ENCODE measurements at regions of chrX and their contacts with region 1.

Region 1: GRCh38 chrX:118872102-118872566 is 48.5 kb downstream of the ZCCHC12 start:
- DNase-seq: no peak
- ATAC-seq: no peak
- H3K4me3 ChIP-seq: no peak overlapping the region
- H3K27ac ChIP-seq: no peak overlapping the region
- H3K4me1 ChIP-seq: no peaks in the 10 kb centered on the region
- H3K27me3 ChIP-seq: no peaks in the 10 kb centered on the region
- CTCF ChIP-seq: no peak
- EP300 ChIP-seq: no peak
- POLR2A ChIP-seq: no peak
- RAD21 ChIP-seq: no peak

Region 2: GRCh38 chrX:118644378-118644777 is 227.8 kb before region 1 on chrX:
- CTCF ChIA-PET with region 1: no interaction called
- POLR2A ChIA-PET with region 1: no interaction called
- in situ Hi-C with region 1: no loop called
- intact Hi-C with region 1: no loop called
- DNase-seq: peak; percentile 54
- ATAC-seq: peak; percentile 87
- H3K4me3 ChIP-seq: no peak overlapping the region
- H3K27ac ChIP-seq: no peak overlapping the region
- H3K4me1 ChIP-seq: no peaks in the 10 kb centered on the region
- H3K27me3 ChIP-seq: no peaks in the 10 kb centered on the region
- CTCF ChIP-seq: peak; percentile 58
- EP300 ChIP-seq: no peak
- POLR2A ChIP-seq: no peak
- RAD21 ChIP-seq: peak; percentile 50; the same call in 1 of the 2 replicates

Region 3: DNA sequence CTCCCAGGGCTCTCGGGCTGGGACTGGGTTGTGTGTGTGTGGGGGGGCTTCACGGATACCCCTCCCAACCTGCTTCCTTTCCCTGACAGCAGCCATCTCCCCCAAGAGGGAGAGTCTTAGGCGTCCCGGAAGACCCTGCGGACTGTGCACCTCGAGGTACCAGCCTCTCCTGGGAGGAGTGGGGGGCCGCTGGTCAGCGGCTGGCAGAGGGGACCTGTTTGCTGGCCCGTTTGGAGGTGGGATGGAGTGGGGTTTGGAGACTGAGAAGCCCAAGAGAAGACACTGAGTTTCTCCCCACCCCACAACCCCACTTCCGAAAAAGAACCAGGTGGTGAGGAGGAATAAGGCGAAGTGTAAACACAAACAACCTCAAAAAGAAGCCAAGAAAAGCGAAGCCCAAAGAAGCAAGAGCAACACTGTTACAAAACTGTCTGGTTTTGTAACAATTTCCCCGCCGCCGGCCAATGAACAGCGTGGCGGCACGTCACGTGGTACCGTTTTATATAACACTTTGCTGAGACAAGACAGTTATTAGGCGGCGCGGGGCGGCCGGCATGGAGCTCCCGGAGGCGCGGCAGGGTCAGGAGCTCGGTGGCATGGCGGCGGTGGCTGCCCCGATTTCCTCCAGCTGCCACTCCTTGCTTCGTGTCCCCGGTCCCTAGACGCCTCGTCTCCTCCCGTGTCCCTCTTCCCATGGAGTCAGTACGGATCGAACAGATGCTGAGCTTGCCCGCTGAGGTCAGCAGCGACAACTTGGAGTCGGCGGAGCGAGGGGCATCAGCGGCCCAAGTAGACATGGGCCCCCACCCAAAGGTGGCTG is 102.2 kb after region 1 on chrX and contains the start of gene LONRF3:
- CTCF ChIA-PET with region 1: no interaction called
- POLR2A ChIA-PET with region 1: no interaction called
- in situ Hi-C with region 1: loop called (anchors 25 kb)
- intact Hi-C with region 1: no loop called
- DNase-seq: peak; percentile 58
- ATAC-seq: peak; percentile 52
- H3K4me3 ChIP-seq: peak within 1 kb of the TSS; percentile 55 to 72 (median 69)
- H3K27ac ChIP-seq: peak within 1 kb of the TSS; percentile 67
- H3K4me1 ChIP-seq: peaks cover 29% of the 10 kb centered on the region
- H3K27me3 ChIP-seq: peaks cover 0 to 17% of the 10 kb centered on the region in 2 experiments; a peak in 3 of 5 replicates
- CTCF ChIP-seq: no peak
- EP300 ChIP-seq: no peak
- POLR2A ChIP-seq: peak; percentile 77 to 81
- RAD21 ChIP-seq: no peak
- total RNA-seq, gene LONRF3: 11.6 and 13.3 TPM in 2 replicates